B cell (primary cell): ENCODE measurements at regions of chr6 and their contacts with region 1.

Region 1: GRCh38 chr6:32868257-32868788 is 14.3 kb downstream of the PSMB9 start:
- DNase-seq: peak; percentile 91
- ATAC-seq: peak; percentile 64
- H3K4me3 ChIP-seq: no peak overlapping the region
- H3K4me3 Mint-ChIP-seq: no peak overlapping the region
- H3K27ac ChIP-seq: no peak overlapping the region
- H3K27ac Mint-ChIP-seq: no peak overlapping the region
- H3K4me1 ChIP-seq: peaks cover 27 to 28% of the 10 kb centered on the region in 2 donors
- H3K4me1 Mint-ChIP-seq: peaks cover 30% of the 10 kb centered on the region
- H3K27me3 ChIP-seq: no peaks in the 10 kb centered on the region
- H3K27me3 Mint-ChIP-seq: no peaks in the 10 kb centered on the region
- CTCF ChIP-seq: peak; percentile 94

Region 2: GRCh38 chr6:32244946-32245398 is 623.4 kb before region 1 on chr6:
- CTCF ChIA-PET with region 1: interaction called, 11 read pairs
- POLR2A ChIA-PET with region 1: no interaction called
- intact Hi-C with region 1: no loop called
- DNase-seq: peak; percentile 87
- ATAC-seq: peak; percentile 93
- H3K4me3 ChIP-seq: peak overlapping the region in 3 of 5 experiments; percentile 8 to 40 (median 24)
- H3K4me3 Mint-ChIP-seq: peak overlapping the region; percentile 76
- H3K27ac ChIP-seq: no peak overlapping the region
- H3K27ac Mint-ChIP-seq: peak overlapping the region; percentile 33
- H3K4me1 ChIP-seq: peaks cover 8 to 16% of the 10 kb centered on the region in 2 donors
- H3K4me1 Mint-ChIP-seq: peaks cover 15% of the 10 kb centered on the region
- H3K27me3 ChIP-seq: no peaks in the 10 kb centered on the region
- H3K27me3 Mint-ChIP-seq: no peaks in the 10 kb centered on the region
- CTCF ChIP-seq: peak; percentile 90

Region 3: GRCh38 chr6:32700391-32701040 is 167.8 kb before region 1 on chr6:
- CTCF ChIA-PET with region 1: interaction called, 42 read pairs
- POLR2A ChIA-PET with region 1: no interaction called
- intact Hi-C with region 1: loop called (anchors 1 kb)
- DNase-seq: peak; percentile 79
- ATAC-seq: peak; percentile 71
- H3K4me3 ChIP-seq: peak overlapping the region in 3 of 5 experiments; percentile 13 to 38 (median 27)
- H3K4me3 Mint-ChIP-seq: peak overlapping the region; percentile 84
- H3K27ac ChIP-seq: no peak overlapping the region
- H3K27ac Mint-ChIP-seq: peak overlapping the region; percentile 85
- H3K4me1 ChIP-seq: peaks cover 0 to 4% of the 10 kb centered on the region in 2 donors
- H3K4me1 Mint-ChIP-seq: peaks cover 18% of the 10 kb centered on the region
- H3K27me3 ChIP-seq: peaks cover 0 to 6% (median 4%) of the 10 kb centered on the region in 4 experiments
- H3K27me3 Mint-ChIP-seq: peaks cover 3% of the 10 kb centered on the region
- CTCF ChIP-seq: peak; percentile 64

Region 4: DNA sequence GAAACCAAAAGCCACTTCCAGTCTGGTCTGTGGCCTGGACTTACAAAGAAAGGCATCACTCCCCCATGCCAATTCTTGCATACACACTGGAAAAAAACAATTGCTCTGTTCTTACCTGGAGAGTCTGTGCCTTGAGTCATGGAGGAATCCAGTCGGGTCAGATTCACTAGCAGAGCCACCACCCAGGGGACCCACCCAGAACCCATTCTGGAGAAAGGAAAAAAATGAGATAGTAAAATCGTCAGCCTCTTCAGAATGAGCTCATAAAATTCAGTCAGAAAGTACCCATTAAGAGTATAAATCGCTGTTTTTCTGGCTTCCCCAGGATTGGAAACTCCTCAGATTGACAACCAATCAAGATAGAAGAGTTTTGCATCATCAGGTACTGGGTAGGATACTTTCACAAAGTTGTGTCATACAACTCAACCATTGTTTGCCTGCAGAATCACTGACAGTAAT is 51.5 kb before region 1 on chr6 and contains the start of gene HLA-DOB:
- CTCF ChIA-PET with region 1: interaction called, 24 read pairs
- POLR2A ChIA-PET with region 1: interaction called, 3 read pairs
- intact Hi-C with region 1: loop called (anchors 5 kb)
- DNase-seq: peak; percentile 87
- ATAC-seq: peak; percentile 76
- H3K4me3 ChIP-seq: peak within 1 kb of the TSS; percentile 91 to 97 (median 95)
- H3K4me3 Mint-ChIP-seq: peak within 1 kb of the TSS; percentile 99
- H3K27ac ChIP-seq: peak within 1 kb of the TSS; percentile 92 to 98
- H3K27ac Mint-ChIP-seq: peak within 1 kb of the TSS; percentile 99
- H3K4me1 ChIP-seq: peaks cover 77 to 80% of the 10 kb centered on the region in 2 donors
- H3K4me1 Mint-ChIP-seq: peaks cover 90% of the 10 kb centered on the region
- H3K27me3 ChIP-seq: no peaks in the 10 kb centered on the region
- H3K27me3 Mint-ChIP-seq: no peaks in the 10 kb centered on the region
- CTCF ChIP-seq: no peak
- total RNA-seq, gene HLA-DOB: 109 TPM in 2 replicates

Region 5: DNA sequence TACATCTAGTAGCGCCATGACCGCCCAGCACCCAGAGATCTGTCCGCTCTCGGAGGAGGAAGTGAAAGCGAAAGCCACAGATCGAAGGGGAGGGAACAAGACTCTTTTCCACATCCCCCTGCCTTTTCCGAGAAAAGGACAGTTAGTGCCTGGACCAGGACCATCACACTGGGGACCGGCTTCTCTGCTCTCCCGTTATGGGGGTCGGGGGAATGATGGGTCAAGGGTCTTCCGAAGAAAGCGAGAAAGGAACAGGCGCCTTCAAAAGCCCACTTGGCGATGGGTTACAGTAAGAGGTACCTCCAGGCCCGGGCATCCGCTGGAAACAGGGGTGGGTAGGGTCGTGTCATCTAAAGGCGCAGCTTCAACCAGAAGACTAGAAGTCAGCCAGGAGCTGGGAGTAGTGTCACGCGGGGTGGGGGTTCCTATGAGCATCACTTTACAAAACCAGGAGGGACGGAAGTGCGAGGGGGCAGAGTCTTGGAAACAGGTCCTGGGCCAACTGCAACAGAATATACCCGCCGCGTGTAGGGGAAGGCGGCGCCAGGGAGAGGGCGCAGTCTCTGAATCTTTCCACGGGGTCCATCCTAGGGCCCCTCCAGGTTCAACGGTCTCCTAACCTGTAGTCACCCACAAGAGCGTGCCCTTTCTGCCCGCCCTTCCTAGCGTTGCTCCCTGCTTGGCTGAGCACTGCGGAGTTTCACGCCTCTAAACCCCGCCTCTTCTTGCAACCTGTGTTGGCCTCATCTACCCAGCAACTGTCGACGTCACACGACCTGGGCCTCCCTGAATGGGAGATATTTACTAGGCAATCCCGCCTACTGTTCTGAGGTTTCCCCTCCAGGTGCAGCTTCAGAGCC is 24.1 kb before region 1 on chr6 and contains the start of gene PSMB8:
- CTCF ChIA-PET with region 1: interaction called, 249 read pairs
- POLR2A ChIA-PET with region 1: interaction called, 37 read pairs
- intact Hi-C with region 1: no loop called
- DNase-seq: peak; percentile 99
- ATAC-seq: peak; percentile 78
- H3K4me3 ChIP-seq: peak within 1 kb of the TSS; percentile 88 to 100 (median 95)
- H3K4me3 Mint-ChIP-seq: peak within 1 kb of the TSS; percentile 95
- H3K27ac ChIP-seq: peak within 1 kb of the TSS; percentile 96 to 97
- H3K27ac Mint-ChIP-seq: peak within 1 kb of the TSS; percentile 99
- H3K4me1 ChIP-seq: peaks cover 72 to 81% of the 10 kb centered on the region in 2 donors
- H3K4me1 Mint-ChIP-seq: peaks cover 86% of the 10 kb centered on the region
- H3K27me3 ChIP-seq: no peaks in the 10 kb centered on the region
- H3K27me3 Mint-ChIP-seq: no peaks in the 10 kb centered on the region
- CTCF ChIP-seq: no peak
- total RNA-seq, gene PSMB8: 127 and 129 TPM in 2 replicates

Region 6: DNA sequence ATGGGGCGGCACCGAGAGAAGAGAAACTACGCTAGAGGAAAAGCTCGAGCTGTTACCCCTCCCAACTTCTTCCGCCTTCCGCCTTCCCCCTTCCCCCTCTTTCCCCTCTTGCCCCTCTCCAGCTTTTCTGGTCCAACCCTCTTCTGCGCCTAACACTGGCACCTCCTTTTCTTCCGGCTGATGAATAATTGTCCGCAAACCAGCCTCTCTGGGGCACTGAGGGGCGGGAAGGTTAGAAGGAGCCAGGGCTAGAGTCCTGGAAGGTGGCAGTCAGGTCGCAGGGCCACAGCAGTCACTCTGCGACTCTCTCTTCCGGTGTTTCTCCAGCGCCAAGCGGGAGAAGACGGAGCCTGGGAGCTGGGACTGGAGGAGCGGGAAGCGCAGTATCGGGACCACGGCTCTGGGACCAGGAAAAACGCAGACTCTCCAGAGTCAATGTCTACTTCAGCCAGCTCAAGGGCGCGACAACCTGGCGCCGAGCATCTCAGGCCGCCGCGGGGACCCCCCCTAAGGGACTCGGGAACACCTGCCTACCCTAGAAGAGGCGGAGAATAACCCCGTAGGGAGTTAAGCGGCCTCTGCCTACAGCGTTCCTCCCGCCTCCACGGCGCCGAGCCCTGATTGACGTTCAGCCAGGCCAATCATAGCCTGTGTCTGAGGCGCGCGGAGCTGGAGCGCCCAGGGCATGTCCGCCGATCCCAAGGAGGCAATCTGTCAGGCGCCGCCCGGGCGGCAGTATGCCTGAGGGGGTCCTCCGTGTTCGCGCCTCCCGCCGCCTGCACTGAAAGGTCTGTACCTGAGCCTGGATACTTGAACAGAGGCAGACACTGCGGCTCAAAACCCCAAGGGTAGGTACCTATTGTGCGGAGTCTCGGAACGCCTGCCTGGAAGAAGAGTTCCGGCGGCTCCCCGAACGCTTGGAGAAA is 26.0 kb after region 1 on chr6:
- CTCF ChIA-PET with region 1: interaction called, 12 read pairs
- POLR2A ChIA-PET with region 1: no interaction called
- intact Hi-C with region 1: no loop called
- DNase-seq: peak; percentile 98
- ATAC-seq: peak; percentile 98
- H3K4me3 ChIP-seq: peak overlapping the region; percentile 84 to 96 (median 92)
- H3K4me3 Mint-ChIP-seq: peak overlapping the region; percentile 99
- H3K27ac ChIP-seq: peak overlapping the region; percentile 89 to 90
- H3K27ac Mint-ChIP-seq: peak overlapping the region; percentile 98
- H3K4me1 ChIP-seq: peaks cover 40 to 42% of the 10 kb centered on the region in 2 donors
- H3K4me1 Mint-ChIP-seq: peaks cover 60% of the 10 kb centered on the region
- H3K27me3 ChIP-seq: no peaks in the 10 kb centered on the region
- H3K27me3 Mint-ChIP-seq: no peaks in the 10 kb centered on the region
- CTCF ChIP-seq: no peak

Region 7: DNA sequence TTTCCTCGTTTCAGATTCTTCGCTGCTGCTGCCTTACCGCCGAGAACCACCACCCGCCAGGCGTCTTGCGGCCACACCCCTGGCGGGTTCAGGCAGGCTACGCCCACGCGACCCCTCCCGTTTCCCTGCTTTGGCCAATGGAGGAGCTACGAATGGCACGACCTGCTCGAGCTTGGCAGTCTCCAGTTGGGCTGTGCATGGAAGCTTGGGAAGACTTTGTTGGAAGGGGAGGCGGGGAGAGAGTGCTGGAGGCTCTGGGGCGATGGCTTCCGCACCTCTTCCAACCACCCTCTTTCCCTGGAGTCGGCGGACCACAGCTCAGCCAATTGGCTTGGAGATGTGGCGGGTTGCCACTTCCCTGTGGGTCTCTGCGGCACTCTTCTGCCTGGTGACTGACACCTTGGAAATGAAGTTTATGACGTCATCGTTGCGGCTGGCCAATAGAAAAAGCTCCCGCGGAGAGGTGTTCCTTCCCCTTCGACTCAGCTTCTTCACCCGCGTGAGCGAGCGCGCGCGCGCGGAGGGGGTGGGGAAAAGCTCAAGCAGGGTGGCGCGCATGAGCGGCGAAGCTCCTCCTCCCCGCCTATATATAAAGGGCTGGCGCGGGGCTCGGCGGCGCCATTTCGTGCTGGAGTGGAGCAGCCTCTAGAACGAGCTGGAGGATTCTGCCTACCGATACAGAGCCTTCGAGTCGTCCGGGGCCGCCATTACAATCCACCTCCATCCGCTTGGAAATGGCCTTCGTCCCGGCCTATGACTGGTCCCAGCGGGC is 103.4 kb after region 1 on chr6:
- CTCF ChIA-PET with region 1: interaction called, 22 read pairs
- POLR2A ChIA-PET with region 1: interaction called, 11 read pairs
- intact Hi-C with region 1: no loop called
- DNase-seq: peak; percentile 100
- ATAC-seq: peak; percentile 50
- H3K4me3 ChIP-seq: peak overlapping the region; percentile 88 to 100 (median 96)
- H3K4me3 Mint-ChIP-seq: peak overlapping the region; percentile 96
- H3K27ac ChIP-seq: peak overlapping the region; percentile 96
- H3K27ac Mint-ChIP-seq: peak overlapping the region; percentile 99
- H3K4me1 ChIP-seq: peaks cover 32 to 43% of the 10 kb centered on the region in 2 donors
- H3K4me1 Mint-ChIP-seq: peaks cover 40% of the 10 kb centered on the region
- H3K27me3 ChIP-seq: no peaks in the 10 kb centered on the region
- H3K27me3 Mint-ChIP-seq: no peaks in the 10 kb centered on the region
- CTCF ChIP-seq: no peak